ENCODE measurements at regions of chr2 and their contacts with region 1.

Region 1: DNA sequence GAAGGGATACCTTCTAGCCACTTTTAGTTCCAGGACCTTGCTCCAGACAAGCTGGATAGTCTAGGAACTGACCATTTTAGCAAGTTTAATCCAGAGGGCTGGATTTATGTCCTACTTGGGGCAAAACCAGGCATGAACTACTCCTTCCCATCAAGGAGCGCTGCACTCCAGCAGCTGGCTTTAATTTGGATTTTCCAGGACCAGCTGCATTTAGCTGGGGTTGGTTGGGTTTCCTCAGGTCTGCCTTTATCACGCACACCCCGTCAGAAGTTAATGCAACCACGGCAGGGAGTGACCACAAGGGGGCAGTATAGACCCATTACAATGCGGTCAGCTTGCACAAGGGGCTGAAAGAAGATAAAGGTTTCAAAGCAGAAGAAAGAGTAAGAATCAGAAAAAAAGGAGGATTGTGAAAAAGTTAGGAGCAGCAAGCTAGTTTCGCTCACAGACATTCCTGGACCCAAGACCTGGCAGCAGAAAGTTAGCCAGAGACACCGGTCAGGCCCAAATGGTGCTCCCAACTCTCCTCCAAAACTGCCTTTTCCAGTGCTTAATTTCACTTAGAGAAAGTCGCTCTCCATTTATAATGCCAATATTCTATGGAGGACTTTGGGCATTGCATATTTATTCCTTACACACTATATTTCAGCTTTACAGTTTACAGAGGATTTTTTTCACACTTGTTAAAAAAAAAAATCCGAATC is 40.1 kb downstream of the SLC4A1AP start:
- DNase-seq: peak; percentile 61 to 95
- H3K4me3 ChIP-seq: no peak overlapping the region
- H3K27ac ChIP-seq: peak overlapping the region; percentile 95 to 97
- H3K4me1 ChIP-seq: peaks cover 28 to 30% of the 10 kb centered on the region in 2 donors
- H3K27me3 ChIP-seq: no peaks in the 10 kb centered on the region
- CTCF ChIP-seq: peak; percentile 85 to 95 (median 90)

Region 2: GRCh38 chr2:27347641-27348040 is 356.1 kb before region 1 on chr2:
- intact Hi-C with region 1: no loop called
- DNase-seq: no peak
- H3K4me3 ChIP-seq: no peak overlapping the region
- H3K27ac ChIP-seq: no peak overlapping the region
- H3K4me1 ChIP-seq: no peaks in the 10 kb centered on the region
- H3K27me3 ChIP-seq: no peaks in the 10 kb centered on the region
- CTCF ChIP-seq: no peak

Region 3: GRCh38 chr2:27723372-27724144 is 19.8 kb after region 1 on chr2:
- intact Hi-C with region 1: loop called (anchors 1 kb)
- DNase-seq: peak in 1 of 2 donors; percentile 90
- H3K4me3 ChIP-seq: no peak overlapping the region
- H3K27ac ChIP-seq: peak overlapping the region; percentile 87 to 95
- H3K4me1 ChIP-seq: peaks cover 24 to 45% of the 10 kb centered on the region in 2 donors
- H3K27me3 ChIP-seq: no peaks in the 10 kb centered on the region
- CTCF ChIP-seq: peak; percentile 84 to 97 (median 90)

Region 4: DNA sequence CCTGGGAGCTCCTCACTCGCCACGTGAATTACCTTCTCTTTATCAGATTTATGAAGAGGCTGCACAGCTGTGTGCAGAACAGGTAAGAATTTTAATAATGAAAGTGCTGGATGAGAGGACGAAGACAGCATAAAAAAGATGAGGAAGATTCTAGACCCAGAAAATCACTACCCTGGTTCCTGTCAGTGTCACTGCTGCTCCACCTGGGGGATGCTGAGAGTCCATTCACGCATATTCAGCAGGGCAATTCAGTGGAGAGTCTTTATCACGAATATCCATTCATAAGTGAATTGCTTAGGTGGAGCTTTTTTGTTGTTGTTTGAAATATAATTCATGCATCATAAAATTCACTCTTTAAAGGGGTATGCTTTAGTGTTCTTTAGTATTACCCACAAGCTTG is 119.8 kb after region 1 on chr2:
- intact Hi-C with region 1: loop called (anchors 1 kb)
- DNase-seq: no peak
- H3K4me3 ChIP-seq: peak overlapping the region in 1 of 2 donors; percentile 54
- H3K27ac ChIP-seq: peak overlapping the region; percentile 0 to 40
- H3K4me1 ChIP-seq: peaks cover 0 to 8% of the 10 kb centered on the region in 2 donors
- H3K27me3 ChIP-seq: no peaks in the 10 kb centered on the region
- CTCF ChIP-seq: peak; percentile 35 to 61 (median 44)

Region 5: DNA sequence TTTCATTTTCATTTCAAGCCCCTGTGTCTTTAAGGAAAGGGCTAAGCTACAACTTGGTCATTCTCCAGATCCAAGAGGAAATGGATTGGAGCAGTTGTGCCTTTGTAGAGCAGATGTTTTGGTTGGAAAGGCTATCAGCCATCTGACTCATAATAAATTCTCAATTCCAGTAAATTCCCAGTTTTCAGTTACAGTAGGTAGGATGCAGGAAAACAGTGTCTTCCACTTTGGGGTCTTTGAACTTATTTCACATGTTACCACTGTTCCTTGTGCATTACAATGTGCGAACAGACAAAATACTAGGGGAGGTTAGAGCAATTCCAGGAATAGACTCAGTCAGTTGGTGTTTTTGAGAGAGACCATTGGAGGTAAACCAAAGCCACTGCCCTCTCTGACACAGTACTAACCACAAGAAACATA is 398.7 kb after region 1 on chr2:
- intact Hi-C with region 1: loop called (anchors 5 kb)
- DNase-seq: no peak
- H3K4me3 ChIP-seq: peak overlapping the region; percentile 5 to 18
- H3K27ac ChIP-seq: peak overlapping the region; percentile 74 to 75
- H3K4me1 ChIP-seq: peaks cover 3 to 34% of the 10 kb centered on the region in 2 donors
- H3K27me3 ChIP-seq: no peaks in the 10 kb centered on the region
- CTCF ChIP-seq: no peak

Region 6: DNA sequence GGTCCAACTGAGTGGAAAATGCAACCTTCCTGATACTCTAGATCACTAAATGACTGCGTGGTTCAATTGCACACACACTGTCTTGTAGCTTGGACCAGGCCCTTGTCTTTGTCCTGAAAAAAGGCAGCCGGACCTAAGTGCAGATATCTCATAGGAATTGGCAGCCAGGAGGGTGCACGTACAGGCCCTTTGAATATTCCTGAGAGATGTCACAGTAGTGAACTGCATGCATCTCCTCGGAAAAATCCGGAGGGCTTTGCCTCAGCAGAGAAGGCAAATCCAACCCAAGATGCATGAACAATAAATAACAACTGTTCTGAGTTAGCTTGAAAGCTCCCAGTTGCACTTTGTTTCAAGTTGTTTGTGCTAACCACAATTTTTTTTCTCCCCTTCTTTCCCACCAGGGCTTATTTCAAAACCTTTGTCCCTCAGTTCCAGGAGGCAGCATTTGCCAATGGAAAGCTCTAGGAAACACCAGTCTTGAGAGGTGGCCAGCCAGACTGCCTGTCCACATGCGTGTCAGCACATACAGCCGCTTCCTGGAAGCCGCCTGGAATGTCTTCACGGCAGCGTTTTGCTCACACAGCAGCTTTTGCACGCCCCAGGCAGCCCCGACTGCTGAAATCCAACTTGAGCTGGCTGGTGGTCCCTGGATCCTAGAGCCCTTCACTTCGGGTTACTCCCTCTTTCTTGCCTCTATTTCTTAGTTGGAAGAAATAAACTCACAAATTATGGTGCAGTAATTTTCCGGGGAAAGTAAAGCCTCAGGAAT is 634.4 kb after region 1 on chr2:
- intact Hi-C with region 1: loop called (anchors 1 kb)
- DNase-seq: peak in 1 of 2 donors; percentile 92
- H3K4me3 ChIP-seq: no peak overlapping the region
- H3K27ac ChIP-seq: peak overlapping the region; percentile 45 to 57
- H3K4me1 ChIP-seq: peaks cover 10 to 62% of the 10 kb centered on the region in 2 donors
- H3K27me3 ChIP-seq: no peaks in the 10 kb centered on the region
- CTCF ChIP-seq: no peak

Region 7: GRCh38 chr2:28621172-28622100 is 917.6 kb after region 1 on chr2:
- intact Hi-C with region 1: loop called (anchors 5 kb)
- DNase-seq: peak; percentile 86 to 97
- H3K4me3 ChIP-seq: peak overlapping the region in 1 of 2 donors; percentile 8
- H3K27ac ChIP-seq: peak overlapping the region; percentile 94 to 100
- H3K4me1 ChIP-seq: peaks cover 34 to 65% of the 10 kb centered on the region in 2 donors
- H3K27me3 ChIP-seq: no peaks in the 10 kb centered on the region
- CTCF ChIP-seq: no peak

Measured in ascending aorta (tissue), 2 donors.